ENCODE measurements at regions of chr14 and their contacts with region 1.

Region 1: GRCh38 chr14:64478634-64479250 is 13.4 kb downstream of the AKAP5 start:
- DNase-seq: no peak
- ATAC-seq: no peak

Region 2: GRCh38 chr14:64421166-64421565 is 57.6 kb before region 1 on chr14:
- intact Hi-C with region 1: loop called in 1 of 2 experiments (anchors 10 kb)
- DNase-seq: no peak
- ATAC-seq: peak in 1 of 2 donors; percentile 79

Region 3: GRCh38 chr14:65594153-65594881 is 1115.6 kb after region 1 on chr14:
- intact Hi-C with region 1: no loop called
- DNase-seq: no peak
- ATAC-seq: no peak

Measured in left cardiac atrium (tissue), 4 donors.